ENCODE measurements at regions of chr12 and their contacts with region 1.

Region 1: GRCh38 chr12:22624870-22625761 is at the start of gene ETNK1:
- DNase-seq: peak; percentile 93 to 97
- H3K4me3 ChIP-seq: peak within 1 kb of the TSS; percentile 86 to 99
- H3K27ac ChIP-seq: peak within 1 kb of the TSS; percentile 97 to 98
- H3K4me1 ChIP-seq: peaks cover 0 to 35% (median 2%) of the 10 kb centered on the region in 4 donors
- H3K27me3 ChIP-seq: no peaks in the 10 kb centered on the region
- CTCF ChIP-seq: peak in 1 of 2 experiments; percentile 4

Region 2: GRCh38 chr12:22544038-22544979 is 80.8 kb before region 1 on chr12 and contains the start of gene C2CD5:
- intact Hi-C with region 1: loop called (anchors 5 kb)
- DNase-seq: peak; percentile 96 to 98
- H3K4me3 ChIP-seq: peak within 1 kb of the TSS; percentile 84 to 91
- H3K27ac ChIP-seq: peak within 1 kb of the TSS; percentile 89 to 90
- H3K4me1 ChIP-seq: peaks cover 0 to 24% (median 13%) of the 10 kb centered on the region in 4 donors
- H3K27me3 ChIP-seq: no peaks in the 10 kb centered on the region
- CTCF ChIP-seq: peak; percentile 17 to 23